Activated CD4-positive, alpha-beta memory T cell treated with anti-CD3 and anti-CD28 coated beads, Interleukin-2, amount 10 ng/mL, durations not matched to agents 7 days and 5 days (primary cell): ENCODE measurements at regions of chr1 and their contacts with region 1.

Region 1: GRCh38 chr1:1399187-1399871 is at the start of gene CCNL2:
- DNase-seq: peak; percentile 100
- H3K4me3 Mint-ChIP-seq: peak within 1 kb of the TSS; percentile 85
- H3K27ac Mint-ChIP-seq: peak within 1 kb of the TSS; percentile 84
- H3K4me1 Mint-ChIP-seq: peaks cover 57% of the 10 kb centered on the region
- H3K27me3 Mint-ChIP-seq: no peaks in the 10 kb centered on the region
- total RNA-seq, gene CCNL2: 104 TPM

Region 2: DNA sequence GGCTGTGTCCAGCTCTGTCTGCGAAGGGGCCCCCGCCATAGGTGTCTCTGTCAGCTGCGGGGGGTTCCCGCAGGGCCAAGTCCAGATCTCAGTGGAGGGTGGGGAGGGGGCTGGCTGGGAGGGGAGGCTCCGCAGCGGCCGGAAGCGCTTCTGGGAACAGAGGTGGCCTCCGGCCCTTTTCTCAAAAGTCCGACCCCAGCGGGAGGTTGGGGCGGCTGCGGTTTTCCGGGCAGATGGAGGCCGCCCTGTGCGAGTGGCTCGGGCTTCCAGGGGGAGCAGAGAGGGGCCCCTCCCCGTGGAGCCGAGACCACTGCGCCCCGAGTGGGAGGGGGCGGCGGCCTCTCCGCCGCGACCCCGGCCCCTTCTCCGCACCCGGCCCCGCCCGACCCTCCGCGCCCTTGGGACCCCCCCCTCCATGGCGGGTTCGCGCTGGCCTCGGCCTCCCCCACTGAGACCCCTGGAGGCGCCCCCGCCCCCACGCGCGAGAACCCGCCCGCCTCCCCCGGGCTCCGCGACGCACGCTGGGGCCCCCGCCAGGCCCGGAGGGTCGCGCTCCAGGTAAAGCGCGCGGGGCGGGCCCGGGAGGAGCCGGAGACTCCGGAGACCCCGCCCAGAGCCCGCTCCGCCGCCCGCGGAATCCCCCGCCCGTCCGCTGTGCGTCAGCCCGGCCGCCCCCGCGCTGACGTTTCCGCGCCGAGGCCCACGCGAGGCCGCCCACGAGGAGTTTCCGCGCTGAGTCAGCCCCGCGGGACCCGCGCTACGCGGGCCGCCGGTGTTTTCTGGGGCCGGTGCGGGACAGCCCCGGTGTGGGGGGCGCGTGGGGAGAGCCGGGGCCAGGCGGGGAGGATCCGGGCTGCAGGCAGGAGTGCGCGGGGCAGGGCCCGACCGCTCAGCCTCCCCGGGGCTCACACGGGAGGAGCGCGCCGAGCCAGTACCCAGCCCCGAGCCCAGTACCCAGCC is 198.2 kb before region 1 on chr1:
- CTCF ChIA-PET with region 1: no interaction called
- POLR2A ChIA-PET with region 1: no interaction called
- DNase-seq: peak; percentile 80
- H3K4me3 Mint-ChIP-seq: peak overlapping the region; percentile 16
- H3K27ac Mint-ChIP-seq: peak overlapping the region; percentile 58
- H3K4me1 Mint-ChIP-seq: peaks cover 15% of the 10 kb centered on the region
- H3K27me3 Mint-ChIP-seq: no peaks in the 10 kb centered on the region

Region 3: DNA sequence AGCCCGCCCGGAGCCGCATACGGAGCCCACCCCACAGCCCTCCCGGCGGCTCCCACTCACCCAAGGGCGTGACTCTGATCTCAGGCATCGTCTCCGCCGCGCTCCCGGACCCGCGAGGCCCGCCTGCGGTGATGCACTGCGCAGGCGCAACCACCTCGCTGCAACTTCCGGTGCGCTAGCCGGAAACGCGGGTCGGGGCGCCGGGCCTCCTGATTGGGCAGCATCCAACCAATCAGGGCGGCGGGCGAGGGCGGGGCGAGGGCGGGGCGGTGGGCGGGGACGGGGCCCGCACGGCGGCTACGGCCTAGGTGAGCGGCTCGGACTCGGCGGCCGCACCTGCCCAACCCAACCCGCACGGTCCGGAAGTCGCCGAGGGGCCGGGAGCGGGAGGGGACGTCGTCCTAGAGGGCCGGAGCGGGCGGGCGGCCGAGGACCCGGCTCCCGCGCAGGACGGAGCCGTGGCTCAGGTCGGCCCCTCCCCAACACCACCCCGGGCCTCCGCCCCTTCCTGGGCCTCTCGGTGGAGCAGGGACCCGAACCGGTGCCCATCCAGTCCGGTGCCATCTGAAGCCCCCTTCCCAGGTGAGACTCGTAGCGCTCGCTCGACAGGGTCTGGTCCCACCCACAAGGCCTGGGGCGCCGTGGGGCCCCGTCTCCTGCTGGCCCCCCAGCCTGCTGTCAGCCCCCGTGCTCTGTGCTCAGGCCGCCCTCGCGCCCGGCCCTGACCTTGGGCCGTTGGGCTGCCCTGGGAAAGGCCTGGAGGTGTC is 74.6 kb before region 1 on chr1 and contains the starts of genes CPTP and INTS11:
- CTCF ChIA-PET with region 1: no interaction called
- POLR2A ChIA-PET with region 1: interaction called, 11 read pairs
- DNase-seq: peak; percentile 97
- H3K4me3 Mint-ChIP-seq: peak within 1 kb of the TSS; percentile 89
- H3K27ac Mint-ChIP-seq: peak within 1 kb of the TSS; percentile 86
- H3K4me1 Mint-ChIP-seq: peaks cover 38% of the 10 kb centered on the region
- H3K27me3 Mint-ChIP-seq: no peaks in the 10 kb centered on the region
- total RNA-seq, gene CPTP: 19.8 to 21.9 TPM
- total RNA-seq, gene INTS11: 109 to 111 TPM

Region 4: GRCh38 chr1:1387098-1388077 is 11.9 kb before region 1 on chr1:
- CTCF ChIA-PET with region 1: interaction called, 9 read pairs
- POLR2A ChIA-PET with region 1: interaction called, 12 read pairs
- DNase-seq: no peak
- H3K4me3 Mint-ChIP-seq: no peak overlapping the region
- H3K27ac Mint-ChIP-seq: no peak overlapping the region
- H3K4me1 Mint-ChIP-seq: peaks cover 1% of the 10 kb centered on the region
- H3K27me3 Mint-ChIP-seq: no peaks in the 10 kb centered on the region